Gastrocnemius medialis (tissue), 4 donors: ENCODE measurements at regions of chr4 and their contacts with region 1.

Region 1: GRCh38 chr4:56289934-56290333 is 97.4 kb downstream of the AASDH start:
- DNase-seq: no peak
- ATAC-seq: no peak
- H3K4me3 ChIP-seq: no peak overlapping the region
- H3K27ac ChIP-seq: no peak overlapping the region
- H3K4me1 ChIP-seq: no peaks in the 10 kb centered on the region
- H3K27me3 ChIP-seq: no peaks in the 10 kb centered on the region
- CTCF ChIP-seq: no peak
- POLR2A ChIP-seq: no peak

Region 2: GRCh38 chr4:55973650-55974049 is 316.3 kb before region 1 on chr4:
- in situ Hi-C with region 1: loop called in 1 of 4 experiments (anchors 25 kb)
- intact Hi-C with region 1: no loop called
- DNase-seq: no peak
- ATAC-seq: no peak
- H3K4me3 ChIP-seq: no peak overlapping the region
- H3K27ac ChIP-seq: no peak overlapping the region
- H3K4me1 ChIP-seq: no peaks in the 10 kb centered on the region
- H3K27me3 ChIP-seq: no peaks in the 10 kb centered on the region
- CTCF ChIP-seq: no peak
- POLR2A ChIP-seq: no peak

Region 3: GRCh38 chr4:56181140-56181953 is 108.6 kb before region 1 on chr4:
- in situ Hi-C with region 1: no loop called
- intact Hi-C with region 1: no loop called
- DNase-seq: no peak
- ATAC-seq: no peak
- H3K4me3 ChIP-seq: no peak overlapping the region
- H3K27ac ChIP-seq: no peak overlapping the region
- H3K4me1 ChIP-seq: no peaks in the 10 kb centered on the region
- H3K27me3 ChIP-seq: no peaks in the 10 kb centered on the region
- CTCF ChIP-seq: no peak
- POLR2A ChIP-seq: no peak